Mammary epithelial cell (primary cell): ENCODE measurements at regions of chr1 and their contacts with region 1.

Region 1: GRCh38 chr1:1374929-1375662 is at the start of gene AURKAIP1:
- DNase-seq: peak; percentile 100
- H3K4me3 ChIP-seq: peak within 1 kb of the TSS; percentile 88 to 95 (median 92)
- H3K27ac ChIP-seq: peak within 1 kb of the TSS; percentile 76
- H3K4me1 ChIP-seq: peaks cover 27% of the 10 kb centered on the region
- H3K27me3 ChIP-seq: no peaks in the 10 kb centered on the region
- CTCF ChIP-seq: peak in 1 of 2 donors; percentile 52
- total RNA-seq, gene AURKAIP1: 85.0 to 167 TPM

Region 2: GRCh38 chr1:1109743-1110142 is 265.4 kb before region 1 on chr1:
- CTCF ChIA-PET with region 1: no interaction called
- dilution Hi-C with region 1: loop called (anchors 5 kb)
- in situ Hi-C with region 1: no loop called
- intact Hi-C with region 1: no loop called
- DNase-seq: no peak
- H3K4me3 ChIP-seq: no peak overlapping the region
- H3K27ac ChIP-seq: no peak overlapping the region
- H3K4me1 ChIP-seq: no peaks in the 10 kb centered on the region
- H3K27me3 ChIP-seq: no peaks in the 10 kb centered on the region
- CTCF ChIP-seq: no peak

Region 3: GRCh38 chr1:1290238-1290731 is 84.8 kb before region 1 on chr1:
- CTCF ChIA-PET with region 1: no interaction called
- dilution Hi-C with region 1: no loop called
- in situ Hi-C with region 1: no loop called
- intact Hi-C with region 1: no loop called
- DNase-seq: no peak
- H3K4me3 ChIP-seq: no peak overlapping the region
- H3K27ac ChIP-seq: no peak overlapping the region
- H3K4me1 ChIP-seq: peaks cover 9% of the 10 kb centered on the region
- H3K27me3 ChIP-seq: no peaks in the 10 kb centered on the region
- CTCF ChIP-seq: peak; percentile 60 to 83

Region 4: DNA sequence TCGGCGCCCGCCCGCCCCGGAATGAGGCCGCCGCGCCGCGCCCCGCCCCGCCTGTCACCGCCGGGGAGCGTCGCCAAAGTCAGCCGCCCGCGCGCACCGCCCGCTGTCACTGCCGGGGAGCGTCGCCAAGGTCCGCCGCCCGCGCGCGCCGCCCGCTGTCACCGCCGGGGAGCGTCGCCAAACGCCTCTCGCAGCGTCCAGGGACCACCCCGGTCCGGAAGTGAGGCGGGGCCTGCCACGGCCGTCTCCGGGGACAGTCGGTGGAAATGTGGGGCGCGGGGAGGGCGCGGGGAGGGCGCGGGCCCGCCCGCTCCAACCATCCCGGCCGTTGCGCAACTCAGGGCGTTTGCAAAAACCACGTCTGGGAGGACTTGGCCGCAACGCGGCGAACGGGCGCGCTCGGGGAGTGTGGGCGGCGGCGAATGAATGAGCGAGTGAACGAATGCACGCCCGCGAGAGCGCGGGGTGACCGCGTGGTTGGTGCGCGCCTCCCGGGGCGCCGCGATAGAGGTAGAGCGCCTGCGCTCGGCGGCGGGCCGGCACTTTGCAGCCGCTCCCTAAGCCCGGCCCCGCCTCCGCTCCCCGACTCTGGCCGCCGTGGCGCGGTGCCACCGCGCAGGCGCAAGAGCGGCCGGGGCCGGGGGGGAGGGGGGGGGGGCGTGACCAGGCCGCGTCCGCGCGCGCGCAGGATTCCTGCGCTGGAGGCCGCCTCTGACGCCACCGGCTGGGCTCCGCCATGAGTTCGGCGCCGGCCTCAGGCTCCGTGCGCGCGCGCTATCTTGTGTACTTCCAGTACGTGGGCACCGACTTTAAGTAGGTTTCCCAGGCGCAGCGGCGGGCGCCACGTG is 67.0 kb before region 1 on chr1 and contains the starts of genes ACAP3 and PUSL1:
- CTCF ChIA-PET with region 1: no interaction called
- dilution Hi-C with region 1: loop called (anchors 5 kb)
- in situ Hi-C with region 1: no loop called
- intact Hi-C with region 1: loop called (anchors 5 kb)
- DNase-seq: peak; percentile 94
- H3K4me3 ChIP-seq: peak within 1 kb of the TSS; percentile 77 to 85 (median 83)
- H3K27ac ChIP-seq: peak within 1 kb of the TSS; percentile 40
- H3K4me1 ChIP-seq: peaks cover 59% of the 10 kb centered on the region
- H3K27me3 ChIP-seq: no peaks in the 10 kb centered on the region
- CTCF ChIP-seq: no peak
- total RNA-seq, gene ACAP3: 16.7 to 32.3 TPM
- total RNA-seq, gene PUSL1: 21.5 to 23.6 TPM

Region 5: GRCh38 chr1:1441002-1441888 is 66.1 kb after region 1 on chr1:
- CTCF ChIA-PET with region 1: no interaction called
- dilution Hi-C with region 1: loop called (anchors 5 kb)
- in situ Hi-C with region 1: no loop called
- intact Hi-C with region 1: loop called (anchors 2 kb)
- DNase-seq: no peak
- H3K4me3 ChIP-seq: no peak overlapping the region
- H3K27ac ChIP-seq: no peak overlapping the region
- H3K4me1 ChIP-seq: peaks cover 13% of the 10 kb centered on the region
- H3K27me3 ChIP-seq: no peaks in the 10 kb centered on the region
- CTCF ChIP-seq: peak; percentile 81 to 93

Region 6: GRCh38 chr1:1451696-1452367 is 76.7 kb after region 1 on chr1:
- CTCF ChIA-PET with region 1: no interaction called
- dilution Hi-C with region 1: no loop called
- in situ Hi-C with region 1: no loop called
- intact Hi-C with region 1: no loop called
- DNase-seq: no peak
- H3K4me3 ChIP-seq: no peak overlapping the region
- H3K27ac ChIP-seq: no peak overlapping the region
- H3K4me1 ChIP-seq: no peaks in the 10 kb centered on the region
- H3K27me3 ChIP-seq: no peaks in the 10 kb centered on the region
- CTCF ChIP-seq: no peak

Region 7: DNA sequence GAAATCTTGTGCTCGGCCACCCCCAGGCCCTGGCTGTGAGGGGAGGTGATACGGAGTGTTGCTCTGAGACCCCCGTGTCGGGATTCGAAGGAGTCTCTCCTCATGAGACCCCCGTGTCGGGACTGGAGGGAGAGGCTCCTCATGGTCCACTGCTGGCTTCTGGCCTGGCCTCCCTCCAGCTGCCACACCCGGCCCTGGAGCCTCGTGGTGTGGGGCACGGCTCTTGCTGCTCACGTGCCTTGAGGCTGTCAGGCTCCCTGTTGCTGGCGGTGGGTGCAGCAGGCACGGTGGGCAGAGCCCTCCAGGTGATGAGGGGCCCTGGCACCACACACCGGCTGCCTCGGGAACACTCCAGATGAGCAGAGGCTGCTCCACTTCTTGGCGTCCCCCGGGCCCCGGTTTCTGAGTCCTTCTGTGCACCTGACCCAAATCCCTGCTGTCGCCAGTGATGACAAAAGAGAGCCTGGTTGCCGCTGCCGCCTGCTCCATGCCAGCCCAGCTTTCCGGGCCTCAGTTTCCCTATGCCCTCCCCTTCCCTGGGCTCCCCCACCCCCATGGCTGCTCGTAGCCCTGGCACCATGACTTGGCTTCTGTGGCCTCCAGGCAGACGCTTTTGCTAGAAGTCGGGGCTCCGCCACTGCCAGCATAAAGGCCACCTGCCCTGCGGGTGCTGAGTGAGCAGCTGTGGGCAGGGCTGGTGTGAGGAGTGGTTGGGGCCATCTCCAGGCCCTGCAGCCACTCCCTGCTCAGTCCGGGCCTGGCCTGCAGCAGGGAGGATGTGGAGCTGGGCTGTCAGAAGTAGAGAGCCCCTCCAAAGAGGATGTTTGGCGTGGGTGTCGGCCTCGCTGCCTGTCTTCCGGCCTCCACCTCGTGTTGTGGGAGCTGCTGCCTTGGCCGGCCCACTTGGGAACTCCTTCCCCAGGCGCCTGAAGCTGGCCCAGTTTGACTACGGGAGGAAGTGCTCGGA is 153.5 kb after region 1 on chr1:
- CTCF ChIA-PET with region 1: no interaction called
- dilution Hi-C with region 1: loop called (anchors 5 kb)
- in situ Hi-C with region 1: no loop called
- intact Hi-C with region 1: no loop called
- DNase-seq: no peak
- H3K4me3 ChIP-seq: no peak overlapping the region
- H3K27ac ChIP-seq: no peak overlapping the region
- H3K4me1 ChIP-seq: no peaks in the 10 kb centered on the region
- H3K27me3 ChIP-seq: no peaks in the 10 kb centered on the region
- CTCF ChIP-seq: no peak

Region 8: GRCh38 chr1:1890506-1891348 is 515.6 kb after region 1 on chr1 and contains the start of gene GNB1:
- CTCF ChIA-PET with region 1: no interaction called
- dilution Hi-C with region 1: loop called (anchors 10 kb)
- in situ Hi-C with region 1: no loop called
- intact Hi-C with region 1: no loop called
- DNase-seq: peak; percentile 86
- H3K4me3 ChIP-seq: peak within 1 kb of the TSS; percentile 80 to 96 (median 92)
- H3K27ac ChIP-seq: peak within 1 kb of the TSS; percentile 84
- H3K4me1 ChIP-seq: peaks cover 22% of the 10 kb centered on the region
- H3K27me3 ChIP-seq: no peaks in the 10 kb centered on the region
- CTCF ChIP-seq: no peak
- total RNA-seq, gene GNB1: 105 to 480 TPM